ENCODE measurements at regions of chr1 and their contacts with region 1.

Region 1: GRCh38 chr1:229507951-229508822 is at the start of gene NUP133:
- DNase-seq: peak; percentile 100
- H3K4me3 Mint-ChIP-seq: peak within 1 kb of the TSS; percentile 88
- H3K27ac Mint-ChIP-seq: peak within 1 kb of the TSS; percentile 99
- H3K4me1 Mint-ChIP-seq: peaks cover 13% of the 10 kb centered on the region
- H3K27me3 Mint-ChIP-seq: no peaks in the 10 kb centered on the region
- CTCF ChIP-seq: no peak
- total RNA-seq, gene NUP133: 65.2 and 67.3 TPM in 2 replicates

Region 2: GRCh38 chr1:229270547-229271447 is 237.4 kb before region 1 on chr1 and contains the start of gene RAB4A:
- CTCF ChIA-PET with region 1: no interaction called
- POLR2A ChIA-PET with region 1: interaction called, 50 read pairs
- intact Hi-C with region 1: no loop called
- DNase-seq: peak; percentile 96
- H3K4me3 Mint-ChIP-seq: peak within 1 kb of the TSS; percentile 80
- H3K27ac Mint-ChIP-seq: peak within 1 kb of the TSS; percentile 77
- H3K4me1 Mint-ChIP-seq: peaks cover 48% of the 10 kb centered on the region
- H3K27me3 Mint-ChIP-seq: no peaks in the 10 kb centered on the region
- CTCF ChIP-seq: no peak
- total RNA-seq, gene RAB4A: 87.4 and 88.6 TPM in 2 replicates

Region 3: GRCh38 chr1:229479660-229480399 is 28.4 kb before region 1 on chr1:
- CTCF ChIA-PET with region 1: interaction called, 23 read pairs
- POLR2A ChIA-PET with region 1: interaction called, 20 read pairs
- intact Hi-C with region 1: no loop called
- DNase-seq: no peak
- H3K4me3 Mint-ChIP-seq: no peak overlapping the region
- H3K27ac Mint-ChIP-seq: peak overlapping the region; percentile 0
- H3K4me1 Mint-ChIP-seq: no peaks in the 10 kb centered on the region
- H3K27me3 Mint-ChIP-seq: no peaks in the 10 kb centered on the region
- CTCF ChIP-seq: no peak

Region 4: GRCh38 chr1:229495782-229496181 is 12.4 kb before region 1 on chr1:
- CTCF ChIA-PET with region 1: interaction called, 6 read pairs
- POLR2A ChIA-PET with region 1: interaction called, 31 read pairs
- intact Hi-C with region 1: no loop called
- DNase-seq: no peak
- H3K4me3 Mint-ChIP-seq: no peak overlapping the region
- H3K27ac Mint-ChIP-seq: no peak overlapping the region
- H3K4me1 Mint-ChIP-seq: no peaks in the 10 kb centered on the region
- H3K27me3 Mint-ChIP-seq: no peaks in the 10 kb centered on the region
- CTCF ChIP-seq: no peak

Region 5: DNA sequence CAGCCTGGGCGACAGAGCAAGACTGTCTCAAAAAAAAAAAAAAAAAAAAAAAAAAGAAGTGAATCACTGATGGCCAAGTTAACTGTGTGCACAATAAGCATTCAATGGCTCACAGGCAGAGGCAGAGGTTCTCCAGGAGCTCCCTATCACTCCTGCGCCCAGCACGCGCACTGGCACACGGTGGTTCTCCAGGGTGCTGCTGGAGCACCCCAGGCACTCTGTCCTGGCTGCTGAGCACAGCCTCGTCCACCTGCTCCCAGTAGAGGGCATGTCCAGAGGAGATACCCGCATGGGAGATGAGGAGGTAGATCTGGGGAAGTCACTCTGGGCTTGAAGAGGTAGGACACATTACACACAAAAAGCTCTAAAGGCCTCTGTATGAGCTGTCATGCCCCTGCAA is 21.5 kb after region 1 on chr1:
- CTCF ChIA-PET with region 1: no interaction called
- POLR2A ChIA-PET with region 1: interaction called, 19 read pairs
- intact Hi-C with region 1: no loop called
- DNase-seq: no peak
- H3K4me3 Mint-ChIP-seq: no peak overlapping the region
- H3K27ac Mint-ChIP-seq: no peak overlapping the region
- H3K4me1 Mint-ChIP-seq: no peaks in the 10 kb centered on the region
- H3K27me3 Mint-ChIP-seq: no peaks in the 10 kb centered on the region
- CTCF ChIP-seq: no peak

Region 6: GRCh38 chr1:229625915-229626831 is 118.0 kb after region 1 on chr1 and contains the starts of genes TAF5L and URB2:
- CTCF ChIA-PET with region 1: interaction called, 3 read pairs
- POLR2A ChIA-PET with region 1: interaction called, 34 read pairs
- intact Hi-C with region 1: no loop called
- DNase-seq: peak; percentile 96
- H3K4me3 Mint-ChIP-seq: peak within 1 kb of the TSS; percentile 99
- H3K27ac Mint-ChIP-seq: peak within 1 kb of the TSS; percentile 94
- H3K4me1 Mint-ChIP-seq: peaks cover 57% of the 10 kb centered on the region
- H3K27me3 Mint-ChIP-seq: no peaks in the 10 kb centered on the region
- CTCF ChIP-seq: peak; percentile 7
- total RNA-seq, gene TAF5L: 31.8 and 37.6 TPM in 2 replicates
- total RNA-seq, gene URB2: 25.8 and 35.5 TPM in 2 replicates

Measured in MCF 10A (cell line).